ENCODE measurements at regions of chr3 and their contacts with region 1.

Region 1: GRCh38 chr3:33372218-33373081 is 67.8 kb downstream of the UBP1 start:
- DNase-seq: peak; percentile 20
- ATAC-seq: peak; percentile 58
- H3K4me3 Mint-ChIP-seq: no peak overlapping the region
- H3K27ac Mint-ChIP-seq: no peak overlapping the region
- H3K4me1 Mint-ChIP-seq: peaks cover 6% of the 10 kb centered on the region; the same call in 1 of the 2 replicates
- H3K27me3 Mint-ChIP-seq: no peaks in the 10 kb centered on the region; the same call in 1 of the 2 replicates
- CTCF ChIP-seq: peak; percentile 74

Region 2: GRCh38 chr3:32947789-32948238 is 424.6 kb before region 1 on chr3:
- CTCF ChIA-PET with region 1: interaction called, 14 read pairs
- POLR2A ChIA-PET with region 1: no interaction called
- DNase-seq: peak; percentile 95
- ATAC-seq: peak; percentile 97
- H3K4me3 Mint-ChIP-seq: no peak overlapping the region
- H3K27ac Mint-ChIP-seq: no peak overlapping the region
- H3K4me1 Mint-ChIP-seq: no peaks in the 10 kb centered on the region
- H3K27me3 Mint-ChIP-seq: peaks cover 7% of the 10 kb centered on the region; the same call in 1 of the 2 replicates
- CTCF ChIP-seq: peak; percentile 89

Region 3: DNA sequence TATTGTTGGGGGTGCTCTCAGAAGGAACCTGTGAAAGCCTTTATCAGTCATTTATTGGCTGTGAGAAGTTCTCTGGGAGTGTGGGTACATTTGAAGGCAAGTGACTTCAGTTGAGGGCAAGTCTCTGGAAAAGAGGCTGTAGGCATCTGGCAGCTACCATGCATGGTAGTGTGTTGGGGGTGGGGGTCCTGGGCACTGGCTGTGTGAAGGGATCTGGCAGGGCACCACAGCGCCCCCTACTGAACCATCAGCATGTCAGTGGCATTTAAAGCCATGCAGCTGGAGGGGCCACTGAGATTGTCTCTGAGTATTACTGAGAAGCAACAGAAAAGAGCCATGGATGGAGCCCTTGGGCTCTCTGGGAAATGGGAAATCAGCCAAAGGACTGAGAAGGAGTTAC is 228.0 kb before region 1 on chr3:
- CTCF ChIA-PET with region 1: interaction called, 23 read pairs
- POLR2A ChIA-PET with region 1: no interaction called
- DNase-seq: peak; percentile 76
- ATAC-seq: peak; percentile 93
- H3K4me3 Mint-ChIP-seq: no peak overlapping the region
- H3K27ac Mint-ChIP-seq: no peak overlapping the region
- H3K4me1 Mint-ChIP-seq: peaks cover 7% of the 10 kb centered on the region; the same call in 1 of the 2 replicates
- H3K27me3 Mint-ChIP-seq: no peaks in the 10 kb centered on the region; the same call in 1 of the 2 replicates
- CTCF ChIP-seq: peak; percentile 86

Region 4: DNA sequence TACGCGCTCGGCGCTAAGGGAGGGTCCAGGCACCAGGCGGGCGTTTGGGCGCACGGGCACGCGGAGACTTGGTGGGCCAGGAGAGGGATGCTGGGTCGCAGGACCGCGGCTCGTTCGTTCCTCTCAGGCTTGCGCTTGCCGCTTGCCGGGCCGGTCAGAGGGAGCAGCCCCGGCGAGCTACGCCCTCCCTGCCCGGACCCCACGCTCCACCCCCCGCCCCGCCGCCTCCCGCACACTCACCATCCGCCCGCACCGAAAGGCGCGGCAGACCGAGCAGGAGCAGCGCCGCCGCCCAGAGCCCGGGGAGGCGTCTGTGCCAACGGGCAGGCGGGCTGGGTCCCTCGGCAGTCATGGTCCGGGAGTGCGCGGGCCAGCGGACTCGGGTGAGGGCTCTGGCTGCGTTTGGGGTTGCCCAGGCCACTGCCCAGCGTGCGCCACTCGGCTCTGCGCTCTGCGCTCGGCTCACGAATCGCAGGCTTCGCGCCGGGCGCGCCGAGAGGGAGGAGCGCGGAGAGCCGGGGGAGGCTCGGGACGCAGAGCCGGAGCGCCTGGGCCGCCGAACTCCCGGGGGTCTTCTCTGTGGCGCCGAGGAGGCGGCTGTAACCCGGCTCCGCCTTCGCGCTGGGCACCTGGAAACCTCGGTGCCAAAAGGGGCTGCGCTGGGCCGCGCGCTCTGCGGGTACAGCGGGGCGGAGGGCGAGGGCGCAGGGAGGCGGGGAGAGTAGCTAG is 153.8 kb before region 1 on chr3 and contains the start of gene SUSD5:
- CTCF ChIA-PET with region 1: interaction called, 16 read pairs
- POLR2A ChIA-PET with region 1: no interaction called
- DNase-seq: peak; percentile 71
- ATAC-seq: peak; percentile 88
- H3K4me3 Mint-ChIP-seq: peak within 1 kb of the TSS; percentile 75
- H3K27ac Mint-ChIP-seq: no peak within 1 kb of the TSS
- H3K4me1 Mint-ChIP-seq: peaks cover 12% of the 10 kb centered on the region
- H3K27me3 Mint-ChIP-seq: peaks cover 81% of the 10 kb centered on the region
- CTCF ChIP-seq: no peak
- total RNA-seq, gene SUSD5: 1.2 to 1.6 TPM (median 1.5 TPM) in 3 replicates

Region 5: DNA sequence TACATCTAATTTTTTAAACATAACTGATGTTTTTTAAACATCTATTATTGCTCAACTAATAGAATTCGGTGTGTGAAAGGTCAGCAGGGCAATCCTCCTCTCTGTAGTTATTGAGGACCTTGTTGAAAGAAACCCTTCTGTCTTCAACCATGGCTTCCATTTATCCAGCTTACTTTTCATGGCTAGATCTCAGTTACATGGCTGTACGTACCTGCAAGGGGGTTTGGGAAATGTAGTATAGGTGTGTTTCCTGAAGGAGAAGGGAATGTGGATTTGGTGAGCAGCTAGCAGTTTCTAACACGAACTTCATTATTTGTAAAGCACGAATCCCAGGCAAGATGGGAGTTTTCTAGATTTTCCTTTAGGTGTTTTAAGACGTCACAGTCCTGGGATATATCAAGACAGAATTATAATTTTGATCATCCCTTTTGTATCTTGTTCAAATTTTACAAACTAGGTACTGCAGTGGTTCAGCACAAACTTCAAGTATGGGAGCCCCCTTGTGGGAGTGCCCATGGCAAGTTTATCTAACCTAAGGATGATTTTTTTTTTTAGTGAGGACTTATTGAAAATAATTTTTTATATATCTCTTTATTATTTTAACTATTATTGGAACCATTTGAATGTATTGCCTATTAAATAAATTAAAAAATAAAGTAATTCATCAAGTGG is 53.6 kb before region 1 on chr3:
- CTCF ChIA-PET with region 1: interaction called, 13 read pairs
- POLR2A ChIA-PET with region 1: no interaction called
- DNase-seq: no peak
- ATAC-seq: peak; percentile 89
- H3K4me3 Mint-ChIP-seq: no peak overlapping the region
- H3K27ac Mint-ChIP-seq: no peak overlapping the region
- H3K4me1 Mint-ChIP-seq: peaks cover 23% of the 10 kb centered on the region
- H3K27me3 Mint-ChIP-seq: no peaks in the 10 kb centered on the region
- CTCF ChIP-seq: no peak

Region 6: GRCh38 chr3:33787328-33788009 is 415.0 kb after region 1 on chr3:
- CTCF ChIA-PET with region 1: interaction called, 22 read pairs
- POLR2A ChIA-PET with region 1: no interaction called
- DNase-seq: peak; percentile 72
- ATAC-seq: peak; percentile 95
- H3K4me3 Mint-ChIP-seq: peak overlapping the region; percentile 37
- H3K27ac Mint-ChIP-seq: no peak overlapping the region
- H3K4me1 Mint-ChIP-seq: peaks cover 25% of the 10 kb centered on the region
- H3K27me3 Mint-ChIP-seq: no peaks in the 10 kb centered on the region; the same call in 1 of the 2 replicates
- CTCF ChIP-seq: peak; percentile 58

Measured in WTC11 (cell line).